H1 (cell line): ENCODE measurements at regions of chr14 and their contacts with region 1.

Region 1: DNA sequence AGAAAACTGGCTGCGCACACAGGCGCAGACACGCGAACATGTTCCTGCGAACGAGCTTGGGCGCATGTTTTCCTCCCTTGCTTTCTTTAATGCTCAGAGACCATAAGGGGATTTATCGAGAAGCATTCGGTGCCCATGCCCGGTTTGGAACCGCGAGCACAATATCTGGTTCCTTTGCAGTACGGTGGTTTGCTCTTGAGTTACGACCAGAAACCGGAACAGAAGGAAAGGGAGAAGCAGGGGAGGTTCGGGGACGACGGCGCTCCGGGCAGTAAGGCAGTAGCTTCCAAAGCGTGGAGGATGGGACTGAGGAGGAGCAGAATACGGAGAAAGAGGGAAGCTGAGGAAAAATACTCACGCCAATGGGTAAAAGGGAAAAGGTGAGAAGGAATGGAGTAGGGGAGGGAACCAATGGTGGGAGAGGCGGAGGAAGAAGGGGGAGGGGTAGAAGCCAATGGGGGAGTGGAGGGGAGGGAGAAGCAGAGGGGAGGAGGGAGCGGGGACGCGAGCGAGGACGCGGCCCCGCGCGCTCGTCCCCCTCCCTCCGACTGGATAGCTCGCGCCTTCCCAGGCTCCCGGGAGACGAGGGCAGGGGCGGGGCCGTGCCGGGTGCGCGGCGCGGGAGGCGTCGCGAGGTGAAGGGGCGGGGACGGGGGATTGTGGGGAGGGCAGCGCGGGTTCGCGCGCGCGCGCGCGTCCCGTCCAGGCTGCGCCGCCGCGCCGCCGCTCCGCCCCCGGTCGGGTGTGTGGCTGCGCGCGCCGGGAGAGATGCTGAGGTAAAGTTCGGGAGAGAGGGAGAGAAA is 625 bp upstream of the ARHGAP5 start:
- DNase-seq: peak; percentile 88 to 90
- H3K4me3 ChIP-seq: peak overlapping the region; percentile 79 to 97 (median 95)
- H3K27ac ChIP-seq: peak overlapping the region; percentile 88
- H3K4me1 ChIP-seq: peaks cover 0 to 4% (median 0%) of the 10 kb centered on the region in 4 experiments; a peak in 1 of 7 replicates
- H3K27me3 ChIP-seq: no peaks in the 10 kb centered on the region
- CTCF ChIP-seq: no peak
- EP300 ChIP-seq: peak in 1 of 2 experiments; percentile 31; a peak in 1 of 3 replicates
- POLR2A ChIP-seq: peak in 1 of 2 experiments; percentile 60; a peak in 1 of 3 replicates
- RAD21 ChIP-seq: 0 out of 4 replicates have a peak, but pooled peaks of 1 of the 2 experiments have one; percentile 1

Region 2: GRCh38 chr14:32064931-32065330 is 11.5 kb before region 1 on chr14:
- CTCF ChIA-PET with region 1: interaction called, 5 read pairs
- POLR2A ChIA-PET with region 1: interaction called, 10 read pairs
- DNase-seq: no peak
- H3K4me3 ChIP-seq: no peak overlapping the region
- H3K27ac ChIP-seq: no peak overlapping the region
- H3K4me1 ChIP-seq: no peaks in the 10 kb centered on the region
- H3K27me3 ChIP-seq: no peaks in the 10 kb centered on the region
- CTCF ChIP-seq: no peak
- EP300 ChIP-seq: no peak
- POLR2A ChIP-seq: no peak
- RAD21 ChIP-seq: no peak

Region 3: DNA sequence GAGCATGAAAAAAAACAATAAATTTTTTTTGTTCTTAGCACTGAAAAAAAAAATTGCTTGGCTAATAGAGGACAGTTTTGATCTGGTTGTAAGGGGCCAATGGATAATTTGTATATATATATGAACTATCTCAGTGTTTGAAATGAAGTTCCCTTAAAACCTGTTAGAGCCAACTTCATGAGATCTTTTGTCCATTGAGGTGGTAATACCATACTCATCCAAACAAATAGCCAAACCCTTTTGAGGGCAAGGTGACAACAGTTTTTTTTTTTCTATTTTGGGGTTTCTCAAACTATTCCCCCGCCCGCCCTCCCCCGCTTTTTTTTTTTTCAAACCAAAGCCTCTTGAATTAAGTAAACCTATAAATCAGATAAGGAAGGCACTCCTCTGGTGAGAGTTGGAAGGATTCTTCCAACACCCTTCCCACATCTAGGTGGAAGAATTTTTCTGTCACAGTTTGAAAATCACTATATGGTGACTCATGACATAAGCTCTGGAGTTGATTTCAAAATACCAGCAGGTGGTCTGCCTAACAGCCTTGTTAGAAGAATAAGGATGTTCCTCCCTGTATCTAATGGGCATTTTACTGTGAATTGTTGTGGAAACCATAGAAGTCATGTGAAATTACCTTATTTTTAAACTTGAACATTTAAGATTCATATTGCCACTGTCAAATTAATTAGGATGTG is 10.8 kb after region 1 on chr14:
- CTCF ChIA-PET with region 1: interaction called, 3 read pairs
- POLR2A ChIA-PET with region 1: interaction called, 12 read pairs
- DNase-seq: no peak
- H3K4me3 ChIP-seq: no peak overlapping the region
- H3K27ac ChIP-seq: no peak overlapping the region
- H3K4me1 ChIP-seq: peaks cover 0 to 4% (median 0%) of the 10 kb centered on the region in 4 experiments; a peak in 1 of 7 replicates
- H3K27me3 ChIP-seq: no peaks in the 10 kb centered on the region
- CTCF ChIP-seq: no peak
- EP300 ChIP-seq: no peak
- POLR2A ChIP-seq: no peak
- RAD21 ChIP-seq: no peak

Region 4: DNA sequence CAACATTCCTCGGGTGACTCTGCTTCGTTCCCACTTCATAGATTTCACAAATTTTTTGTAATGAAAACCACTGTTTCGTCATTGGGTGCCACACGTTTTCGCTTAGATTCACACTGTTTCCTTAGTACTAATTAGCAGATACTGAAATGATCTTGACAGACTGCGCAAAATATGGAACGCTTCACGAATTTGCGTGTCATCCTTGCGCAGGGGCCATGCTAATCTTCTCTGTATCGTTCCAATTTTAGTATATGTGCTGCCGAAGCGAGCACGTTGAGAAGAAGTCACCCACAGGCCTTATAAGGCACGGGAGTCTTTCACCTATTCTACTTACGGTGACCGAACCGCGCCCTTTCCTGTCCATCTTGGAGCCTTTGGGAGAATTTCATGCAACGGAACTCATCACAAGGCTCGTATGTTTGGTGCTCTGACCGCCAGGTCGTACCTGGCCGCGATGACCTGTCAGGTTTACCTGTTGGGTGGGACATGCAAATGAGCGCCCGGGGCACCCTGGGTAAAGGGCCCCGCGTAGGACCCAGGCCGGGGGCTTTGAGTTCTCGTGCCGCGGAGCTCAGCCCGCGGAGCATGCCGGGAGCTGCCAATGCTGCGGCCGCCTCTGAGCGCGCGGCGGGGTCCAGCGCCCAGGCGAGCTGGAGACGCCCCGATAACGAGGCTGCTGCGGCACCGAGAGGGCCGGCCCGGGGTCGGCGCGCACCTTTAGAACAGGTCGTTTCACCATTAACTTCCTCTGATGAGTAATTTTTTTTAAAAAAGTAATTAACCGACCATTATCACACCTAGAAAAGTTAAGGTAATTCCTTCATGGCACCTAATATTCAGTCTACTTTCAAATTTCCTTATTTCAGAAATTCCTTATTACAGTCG is 126.8 kb after region 1 on chr14 and contains the start of gene RNU6-8:
- CTCF ChIA-PET with region 1: interaction called, 9 read pairs
- POLR2A ChIA-PET with region 1: interaction called, 17 read pairs
- DNase-seq: peak; percentile 82 to 85
- H3K4me3 ChIP-seq: peak within 1 kb of the TSS; percentile 48 to 93 (median 90)
- H3K27ac ChIP-seq: peak within 1 kb of the TSS; percentile 92
- H3K4me1 ChIP-seq: peaks cover 0 to 4% (median 1%) of the 10 kb centered on the region in 4 experiments; a peak in 3 of 7 replicates
- H3K27me3 ChIP-seq: no peaks in the 10 kb centered on the region; a peak in 1 of 7 replicates
- CTCF ChIP-seq: no peak
- EP300 ChIP-seq: no peak
- POLR2A ChIP-seq: no peak
- RAD21 ChIP-seq: peak in 1 of 2 experiments; percentile 27; a peak in 1 of 4 replicates
- total RNA-seq, gene RNU6-8: not detected in 2 replicates